Naive thymus-derived CD4-positive, alpha-beta T cell (primary cell): ENCODE measurements at regions of chr7 and their contacts with region 1.

Region 1: GRCh38 chr7:127365164-127365956 is 27.1 kb downstream of the ZNF800 start:
- DNase-seq: no peak
- ATAC-seq: peak; percentile 44
- H3K4me3 ChIP-seq: no peak overlapping the region
- H3K4me3 Mint-ChIP-seq: no peak overlapping the region
- H3K27ac ChIP-seq: no peak overlapping the region
- H3K27ac Mint-ChIP-seq: no peak overlapping the region
- H3K4me1 ChIP-seq: no peaks in the 10 kb centered on the region
- H3K4me1 Mint-ChIP-seq: peaks cover 19 to 45% (median 30%) of the 10 kb centered on the region in 7 donors
- H3K27me3 ChIP-seq: no peaks in the 10 kb centered on the region
- H3K27me3 Mint-ChIP-seq: no peaks in the 10 kb centered on the region

Region 2: GRCh38 chr7:127353897-127354296 is 11.5 kb before region 1 on chr7:
- CTCF ChIA-PET with region 1: interaction called, 3 read pairs
- POLR2A ChIA-PET with region 1: no interaction called
- intact Hi-C with region 1: loop called in 1 of 2 experiments (anchors 2 kb)
- DNase-seq: no peak
- ATAC-seq: no peak
- H3K4me3 ChIP-seq: no peak overlapping the region
- H3K4me3 Mint-ChIP-seq: no peak overlapping the region
- H3K27ac ChIP-seq: no peak overlapping the region
- H3K27ac Mint-ChIP-seq: peak overlapping the region in 1 of 9 donors; percentile 29
- H3K4me1 ChIP-seq: no peaks in the 10 kb centered on the region
- H3K4me1 Mint-ChIP-seq: peaks cover 6 to 44% (median 25%) of the 10 kb centered on the region in 7 donors
- H3K27me3 ChIP-seq: no peaks in the 10 kb centered on the region
- H3K27me3 Mint-ChIP-seq: peaks cover 0 to 1% (median 0%) of the 10 kb centered on the region in 5 donors

Region 3: GRCh38 chr7:127383123-127383835 is 17.9 kb after region 1 on chr7:
- CTCF ChIA-PET with region 1: no interaction called
- POLR2A ChIA-PET with region 1: no interaction called
- intact Hi-C with region 1: loop called in 1 of 2 experiments (anchors 2 kb)
- DNase-seq: no peak
- ATAC-seq: peak; percentile 37
- H3K4me3 ChIP-seq: no peak overlapping the region
- H3K4me3 Mint-ChIP-seq: peak overlapping the region in 7 of 10 donors; percentile 3 to 69 (median 40)
- H3K27ac ChIP-seq: no peak overlapping the region
- H3K27ac Mint-ChIP-seq: peak overlapping the region in 6 of 9 donors; percentile 1 to 80 (median 26)
- H3K4me1 ChIP-seq: peaks cover 30 to 36% of the 10 kb centered on the region in 2 donors
- H3K4me1 Mint-ChIP-seq: peaks cover 49 to 95% (median 83%) of the 10 kb centered on the region in 7 donors
- H3K27me3 ChIP-seq: no peaks in the 10 kb centered on the region
- H3K27me3 Mint-ChIP-seq: no peaks in the 10 kb centered on the region